Naive thymus-derived CD4-positive, alpha-beta T cell (primary cell): ENCODE measurements at regions of chr14 and their contacts with region 1.

Region 1: GRCh38 chr14:22319526-22320361 is 269.3 kb downstream of the DAD1 start:
- DNase-seq: peak in 3 of 9 donors; percentile 12 to 29 (median 15)
- ATAC-seq: peak; percentile 51
- H3K4me3 ChIP-seq: no peak overlapping the region
- H3K4me3 Mint-ChIP-seq: peak overlapping the region; percentile 60 to 84 (median 74)
- H3K27ac ChIP-seq: no peak overlapping the region
- H3K27ac Mint-ChIP-seq: peak overlapping the region in 5 of 9 donors; percentile 57 to 82 (median 69)
- H3K4me1 ChIP-seq: no peaks in the 10 kb centered on the region
- H3K4me1 Mint-ChIP-seq: no peaks in the 10 kb centered on the region
- H3K27me3 ChIP-seq: no peaks in the 10 kb centered on the region
- H3K27me3 Mint-ChIP-seq: no peaks in the 10 kb centered on the region

Region 2: GRCh38 chr14:22375321-22375930 is 55.7 kb after region 1 on chr14:
- CTCF ChIA-PET with region 1: no interaction called
- POLR2A ChIA-PET with region 1: no interaction called
- intact Hi-C with region 1: loop called (anchors 5 to 10 kb)
- DNase-seq: peak in 1 of 9 donors; percentile 2
- ATAC-seq: no peak
- H3K4me3 ChIP-seq: no peak overlapping the region
- H3K4me3 Mint-ChIP-seq: no peak overlapping the region
- H3K27ac ChIP-seq: no peak overlapping the region
- H3K27ac Mint-ChIP-seq: no peak overlapping the region
- H3K4me1 ChIP-seq: no peaks in the 10 kb centered on the region
- H3K4me1 Mint-ChIP-seq: no peaks in the 10 kb centered on the region
- H3K27me3 ChIP-seq: no peaks in the 10 kb centered on the region
- H3K27me3 Mint-ChIP-seq: no peaks in the 10 kb centered on the region